CD14-positive monocyte (primary cell): ENCODE measurements at regions of chr12 and their contacts with region 1.

Region 1: GRCh38 chr12:4526923-4527546 is 11.7 kb upstream of the RAD51AP1 start:
- DNase-seq: peak in 1 of 3 donors; percentile 25
- H3K4me3 ChIP-seq: no peak overlapping the region
- H3K4me3 Mint-ChIP-seq: no peak overlapping the region
- H3K27ac ChIP-seq: no peak overlapping the region
- H3K27ac Mint-ChIP-seq: no peak overlapping the region
- H3K4me1 ChIP-seq: no peaks in the 10 kb centered on the region
- H3K4me1 Mint-ChIP-seq: no peaks in the 10 kb centered on the region
- H3K27me3 ChIP-seq: no peaks in the 10 kb centered on the region
- H3K27me3 Mint-ChIP-seq: no peaks in the 10 kb centered on the region
- CTCF ChIP-seq: peak; percentile 79

Region 2: DNA sequence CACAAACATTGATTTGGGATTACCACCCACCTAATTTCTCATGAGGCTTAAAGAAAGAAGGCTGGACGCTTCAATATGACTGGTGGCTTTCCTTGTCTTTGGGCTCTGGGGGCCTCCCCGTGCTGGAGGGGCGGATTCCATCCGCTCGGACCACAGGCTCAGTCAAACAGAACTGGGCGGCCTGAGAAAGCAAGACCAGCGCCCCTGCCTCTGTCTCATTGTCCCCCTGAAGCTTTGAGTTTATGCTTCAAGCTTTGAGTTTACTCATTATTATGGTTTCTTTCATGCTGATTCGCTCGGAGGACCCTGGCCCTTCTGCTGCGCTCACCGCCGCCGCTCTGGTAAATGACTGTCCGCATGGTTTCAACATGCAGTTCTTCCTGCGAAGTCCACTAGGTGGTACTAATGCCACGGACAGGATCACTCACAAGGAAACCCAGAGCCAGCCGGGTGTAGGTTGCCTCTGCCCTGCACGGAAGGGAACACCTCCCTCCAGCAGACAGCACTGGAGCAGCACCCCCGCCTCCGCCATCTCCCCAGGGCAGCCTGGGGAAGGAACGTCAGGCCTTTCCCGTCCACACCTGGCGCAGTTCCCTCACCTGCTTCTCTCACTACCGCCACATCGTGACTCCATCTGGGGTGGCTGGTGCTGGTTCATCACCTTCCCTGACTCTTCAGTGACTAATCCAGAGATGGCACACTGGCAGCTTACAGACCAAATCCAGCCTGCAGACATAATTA is 219.3 kb before region 1 on chr12:
- intact Hi-C with region 1: loop called in 1 of 2 experiments (anchors 10 kb)
- DNase-seq: peak; percentile 39 to 49 (median 48)
- H3K4me3 ChIP-seq: no peak overlapping the region
- H3K4me3 Mint-ChIP-seq: peak overlapping the region in 1 of 2 donors; percentile 46
- H3K27ac ChIP-seq: no peak overlapping the region
- H3K27ac Mint-ChIP-seq: peak overlapping the region in 1 of 7 donors; percentile 58
- H3K4me1 ChIP-seq: peaks cover 0 to 7% of the 10 kb centered on the region in 2 donors
- H3K4me1 Mint-ChIP-seq: peaks cover 6% of the 10 kb centered on the region
- H3K27me3 ChIP-seq: no peaks in the 10 kb centered on the region
- H3K27me3 Mint-ChIP-seq: peaks cover 0 to 2% (median 0%) of the 10 kb centered on the region in 3 donors
- CTCF ChIP-seq: peak; percentile 75

Region 3: DNA sequence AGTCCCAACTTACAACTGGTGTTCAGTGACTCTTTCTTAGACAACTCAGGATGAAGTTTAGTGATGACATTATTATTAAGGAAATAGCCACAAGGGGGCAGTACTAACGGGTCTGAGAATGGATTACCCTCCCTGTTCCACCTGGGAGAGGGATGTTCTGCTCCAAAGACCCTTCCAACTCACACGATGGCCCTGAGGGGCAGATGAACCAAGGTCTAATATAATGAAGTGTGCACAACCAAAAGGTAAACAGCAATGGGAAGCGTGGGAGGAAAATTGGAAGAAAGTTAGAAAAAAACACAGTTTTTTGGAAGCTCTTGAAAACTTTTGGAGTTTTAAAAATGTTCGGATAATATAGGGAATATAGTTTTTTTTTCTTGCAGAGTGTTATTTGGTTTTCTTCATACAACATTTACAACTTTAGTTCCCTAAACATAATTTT is 105.4 kb before region 1 on chr12:
- intact Hi-C with region 1: loop called (anchors 5 kb)
- DNase-seq: peak; percentile 21 to 65 (median 50)
- H3K4me3 ChIP-seq: no peak overlapping the region
- H3K4me3 Mint-ChIP-seq: no peak overlapping the region
- H3K27ac ChIP-seq: no peak overlapping the region
- H3K27ac Mint-ChIP-seq: no peak overlapping the region
- H3K4me1 ChIP-seq: no peaks in the 10 kb centered on the region
- H3K4me1 Mint-ChIP-seq: no peaks in the 10 kb centered on the region
- H3K27me3 ChIP-seq: no peaks in the 10 kb centered on the region
- H3K27me3 Mint-ChIP-seq: peaks cover 9 to 19% (median 18%) of the 10 kb centered on the region in 3 donors
- CTCF ChIP-seq: peak; percentile 82